ENCODE measurements at regions of chr9 and their contacts with region 1.

Region 1: GRCh38 chr9:3441197-3441816 is 84.5 kb downstream of the RFX3 start:
- DNase-seq: peak in 5 of 10 donors; percentile 6 to 79 (median 19)

Region 2: GRCh38 chr9:2984491-2984890 is 456.8 kb before region 1 on chr9:
- intact Hi-C with region 1: no loop called
- DNase-seq: no peak

Region 3: GRCh38 chr9:3240656-3241268 is 200.5 kb before region 1 on chr9:
- intact Hi-C with region 1: loop called (anchors 5 kb)
- DNase-seq: peak; percentile 49 to 93 (median 72)